ENCODE measurements at regions of chr10 and their contacts with region 1.

Region 1: DNA sequence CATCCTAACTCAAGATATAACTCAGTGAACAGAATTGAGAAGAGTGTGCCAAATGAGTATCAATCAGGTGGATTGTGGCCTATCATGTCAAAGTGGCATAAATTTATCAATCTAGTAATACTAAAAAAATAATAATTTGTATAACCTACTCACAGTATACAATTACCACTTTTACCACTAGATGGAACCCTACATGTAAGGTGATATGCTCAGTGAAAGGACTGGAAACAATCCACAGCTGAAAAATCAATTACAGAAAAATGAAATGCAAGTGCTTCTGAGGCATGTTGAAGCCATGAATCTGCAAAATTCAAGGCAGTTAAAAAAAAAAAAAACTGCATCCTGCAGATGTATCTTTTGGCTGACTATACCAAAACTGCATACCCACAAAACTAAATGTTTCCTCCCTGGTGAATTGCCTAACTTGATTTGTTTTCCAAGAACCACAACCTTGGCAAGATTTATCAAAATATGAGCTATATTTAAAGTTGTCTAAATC is 13.9 kb downstream of the ARHGAP19 start:
- DNase-seq: peak; percentile 67
- ATAC-seq: peak; percentile 80
- H3K4me3 ChIP-seq: no peak overlapping the region
- H3K27ac ChIP-seq: peak overlapping the region; percentile 52
- H3K4me1 ChIP-seq: peaks cover 29% of the 10 kb centered on the region
- H3K27me3 ChIP-seq: no peaks in the 10 kb centered on the region
- CTCF ChIP-seq: peak; percentile 65
- EP300 ChIP-seq: no peak
- POLR2A ChIP-seq: no peak
- RAD21 ChIP-seq: peak; percentile 35; the same call in 1 of the 2 replicates

Region 2: GRCh38 chr10:97138174-97138573 is 140.4 kb before region 1 on chr10:
- CTCF ChIA-PET with region 1: no interaction called
- POLR2A ChIA-PET with region 1: no interaction called
- in situ Hi-C with region 1: no loop called
- intact Hi-C with region 1: no loop called
- DNase-seq: peak; percentile 50
- ATAC-seq: peak; percentile 55
- H3K4me3 ChIP-seq: no peak overlapping the region
- H3K27ac ChIP-seq: no peak overlapping the region
- H3K4me1 ChIP-seq: peaks cover 85% of the 10 kb centered on the region
- H3K27me3 ChIP-seq: peaks cover 0 to 14% of the 10 kb centered on the region in 2 experiments; a peak in 1 of 5 replicates
- CTCF ChIP-seq: peak; percentile 80
- EP300 ChIP-seq: no peak
- POLR2A ChIP-seq: no peak
- RAD21 ChIP-seq: peak; percentile 75; the same call in 1 of the 2 replicates

Region 3: GRCh38 chr10:97292097-97292862 is 13.7 kb after region 1 on chr10 and contains the start of gene ARHGAP19:
- CTCF ChIA-PET with region 1: no interaction called
- POLR2A ChIA-PET with region 1: interaction called, 14 read pairs
- in situ Hi-C with region 1: no loop called
- intact Hi-C with region 1: no loop called
- DNase-seq: peak; percentile 99
- ATAC-seq: peak; percentile 93
- H3K4me3 ChIP-seq: peak within 1 kb of the TSS; percentile 61 to 82 (median 69)
- H3K27ac ChIP-seq: peak within 1 kb of the TSS; percentile 97
- H3K4me1 ChIP-seq: peaks cover 30% of the 10 kb centered on the region
- H3K27me3 ChIP-seq: no peaks in the 10 kb centered on the region
- CTCF ChIP-seq: peak; percentile 61
- EP300 ChIP-seq: 0 out of 4 replicates have a peak, but pooled peaks of 1 of the 2 experiments have one; percentile 9
- POLR2A ChIP-seq: peak; percentile 85 to 89
- RAD21 ChIP-seq: peak; percentile 76
- total RNA-seq, gene ARHGAP19: 10.0 and 15.6 TPM in 2 replicates

Region 4: DNA sequence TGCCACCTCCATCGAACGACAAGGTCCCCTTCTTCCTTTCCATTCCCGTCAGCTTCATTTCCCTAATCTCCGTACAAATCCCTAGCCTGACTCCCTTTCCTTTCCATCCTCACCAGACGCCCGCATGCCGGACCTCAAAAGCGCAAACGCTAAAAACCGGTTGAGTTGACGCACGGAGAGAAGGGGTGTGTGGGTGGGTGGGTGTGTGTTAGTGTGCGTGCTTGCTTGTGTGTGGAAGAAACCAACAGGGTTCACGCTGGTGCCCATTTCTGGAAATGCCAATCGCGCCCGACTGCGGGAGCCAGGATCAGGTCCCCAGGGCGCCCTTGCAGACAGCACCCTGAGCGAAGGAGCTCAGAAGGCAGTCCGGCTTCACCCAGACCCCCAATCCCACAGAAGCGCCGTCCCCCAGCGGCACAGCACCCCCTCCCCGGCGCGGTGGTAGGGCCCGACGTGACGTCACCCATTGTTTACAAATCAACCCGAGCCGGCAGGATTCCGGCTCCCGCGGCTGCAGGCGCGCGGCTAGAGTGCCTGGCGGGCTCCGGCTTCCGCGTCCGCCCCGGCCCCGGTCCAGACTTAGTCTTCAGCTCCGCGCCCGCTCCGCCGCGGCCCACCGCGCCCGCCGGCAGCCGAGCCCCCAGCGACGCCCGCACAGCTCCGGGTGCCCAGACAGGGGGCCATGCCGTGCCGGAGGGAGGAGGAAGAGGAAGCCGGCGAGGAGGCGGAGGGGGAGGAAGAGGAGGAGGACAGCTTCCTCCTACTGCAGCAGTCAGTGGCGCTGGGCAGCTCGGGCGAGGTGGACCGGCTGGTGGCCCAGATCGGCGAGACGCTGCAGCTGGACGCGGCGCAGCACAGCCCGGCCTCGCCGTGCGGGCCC is 40.5 kb after region 1 on chr10 and contains the start of gene FRAT1:
- CTCF ChIA-PET with region 1: interaction called, 6 read pairs
- POLR2A ChIA-PET with region 1: interaction called, 11 read pairs
- in situ Hi-C with region 1: no loop called
- intact Hi-C with region 1: no loop called
- DNase-seq: peak; percentile 74
- ATAC-seq: peak; percentile 82
- H3K4me3 ChIP-seq: peak within 1 kb of the TSS; percentile 75 to 84 (median 82)
- H3K27ac ChIP-seq: peak within 1 kb of the TSS; percentile 97
- H3K4me1 ChIP-seq: peaks cover 48% of the 10 kb centered on the region
- H3K27me3 ChIP-seq: peaks cover 0 to 2% of the 10 kb centered on the region in 2 experiments; a peak in 2 of 5 replicates
- CTCF ChIP-seq: no peak
- EP300 ChIP-seq: no peak; a peak in 1 of 4 replicates
- POLR2A ChIP-seq: peak; percentile 49 to 62; a peak in 3 of 4 replicates
- RAD21 ChIP-seq: peak; percentile 51
- total RNA-seq, gene FRAT1: 1.3 and 2.3 TPM in 2 replicates

Region 5: GRCh38 chr10:97327348-97328294 is 49.1 kb after region 1 on chr10:
- CTCF ChIA-PET with region 1: interaction called, 6 read pairs
- POLR2A ChIA-PET with region 1: interaction called, 19 read pairs
- in situ Hi-C with region 1: no loop called
- intact Hi-C with region 1: loop called (anchors 2 kb)
- DNase-seq: peak; percentile 96
- ATAC-seq: peak; percentile 87
- H3K4me3 ChIP-seq: peak overlapping the region in 1 of 3 experiments; percentile 59; a peak in 2 of 6 replicates
- H3K27ac ChIP-seq: peak overlapping the region; percentile 91
- H3K4me1 ChIP-seq: peaks cover 74% of the 10 kb centered on the region
- H3K27me3 ChIP-seq: no peaks in the 10 kb centered on the region
- CTCF ChIP-seq: no peak
- EP300 ChIP-seq: peak; percentile 84 to 96
- POLR2A ChIP-seq: no peak
- RAD21 ChIP-seq: peak; percentile 20; the same call in 1 of the 2 replicates

Region 6: GRCh38 chr10:97334370-97335175 is 56.0 kb after region 1 on chr10 and contains the start of gene FRAT2:
- CTCF ChIA-PET with region 1: interaction called, 6 read pairs
- POLR2A ChIA-PET with region 1: interaction called, 19 read pairs
- in situ Hi-C with region 1: no loop called
- intact Hi-C with region 1: loop called (anchors 2 kb)
- DNase-seq: peak; percentile 74
- ATAC-seq: peak; percentile 76
- H3K4me3 ChIP-seq: peak within 1 kb of the TSS; percentile 65 to 87 (median 82)
- H3K27ac ChIP-seq: peak within 1 kb of the TSS; percentile 85
- H3K4me1 ChIP-seq: peaks cover 52% of the 10 kb centered on the region
- H3K27me3 ChIP-seq: no peaks in the 10 kb centered on the region
- CTCF ChIP-seq: no peak
- EP300 ChIP-seq: peak; percentile 39 to 53; a peak in 1 of 4 replicates
- POLR2A ChIP-seq: peak; percentile 80 to 86
- RAD21 ChIP-seq: peak; percentile 66
- total RNA-seq, gene FRAT2: 10.1 and 14.1 TPM in 2 replicates

Region 7: GRCh38 chr10:97355571-97355975 is 77.0 kb after region 1 on chr10:
- CTCF ChIA-PET with region 1: interaction called, 15 read pairs
- POLR2A ChIA-PET with region 1: no interaction called
- in situ Hi-C with region 1: no loop called
- intact Hi-C with region 1: loop called (anchors 2 kb)
- DNase-seq: no peak
- ATAC-seq: 0 out of 3 replicates have a peak, but pooled peaks have one; percentile 45
- H3K4me3 ChIP-seq: no peak overlapping the region
- H3K27ac ChIP-seq: no peak overlapping the region
- H3K4me1 ChIP-seq: no peaks in the 10 kb centered on the region
- H3K27me3 ChIP-seq: no peaks in the 10 kb centered on the region
- CTCF ChIP-seq: peak; percentile 64
- EP300 ChIP-seq: no peak
- POLR2A ChIP-seq: no peak
- RAD21 ChIP-seq: peak; percentile 48; the same call in 1 of the 2 replicates